Endothelial cell of umbilical vein (primary cell): ENCODE measurements at regions of chr5 and their contacts with region 1.

Region 1: DNA sequence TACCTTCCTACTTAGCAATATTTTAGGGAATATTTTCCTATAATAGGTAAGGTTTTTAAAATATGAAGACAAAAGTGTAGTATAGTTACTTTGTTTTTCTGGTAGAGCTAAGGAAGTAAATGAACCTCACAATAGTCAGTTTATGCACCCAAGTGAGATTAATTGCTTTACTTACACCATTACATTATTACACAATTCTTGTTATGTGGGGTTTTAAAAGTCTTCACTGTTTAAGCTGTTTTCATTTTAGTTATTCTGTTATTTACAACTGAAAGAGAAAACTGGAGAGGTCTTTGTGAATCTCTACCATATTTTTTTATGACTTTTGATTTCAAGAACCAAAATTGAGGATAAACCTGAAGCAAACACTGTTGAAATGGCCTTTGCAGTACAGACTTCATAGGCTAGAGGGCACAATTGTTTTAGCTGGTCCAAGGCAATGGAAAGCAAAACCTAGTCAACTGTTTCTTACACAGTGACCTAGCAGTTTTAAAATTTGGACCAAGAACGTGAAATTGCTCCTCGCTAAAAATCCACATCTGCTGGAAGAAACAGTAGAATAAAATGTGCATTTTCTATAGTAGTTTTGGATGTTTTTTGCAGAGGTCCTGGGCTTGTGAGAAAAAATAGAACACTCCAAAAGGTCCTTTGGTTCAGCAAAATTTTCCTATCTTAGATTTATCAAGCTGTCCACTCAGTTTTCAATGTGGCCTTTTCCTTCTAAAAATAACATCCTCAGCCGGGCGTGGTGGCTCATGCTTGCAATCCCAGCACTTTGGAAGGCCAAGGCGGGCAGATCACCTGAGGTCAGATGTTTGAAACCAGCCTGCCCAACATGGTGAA is 66.4 kb upstream of the FER start:
- DNase-seq: peak; percentile 81
- H3K4me3 ChIP-seq: no peak overlapping the region
- H3K27ac ChIP-seq: no peak overlapping the region
- H3K4me1 ChIP-seq: no peaks in the 10 kb centered on the region
- H3K27me3 ChIP-seq: no peaks in the 10 kb centered on the region
- CTCF ChIP-seq: peak; percentile 59 to 69
- POLR2A ChIP-seq: no peak

Region 2: GRCh38 chr5:108606185-108606584 is 75.1 kb before region 1 on chr5:
- CTCF ChIA-PET with region 1: no interaction called
- POLR2A ChIA-PET with region 1: no interaction called
- dilution Hi-C with region 1: no loop called
- intact Hi-C with region 1: no loop called
- DNase-seq: no peak
- H3K4me3 ChIP-seq: no peak overlapping the region
- H3K27ac ChIP-seq: no peak overlapping the region
- H3K4me1 ChIP-seq: no peaks in the 10 kb centered on the region
- H3K27me3 ChIP-seq: peaks cover 2 to 3% of the 10 kb centered on the region in 2 experiments
- CTCF ChIP-seq: no peak
- POLR2A ChIP-seq: no peak

Region 3: DNA sequence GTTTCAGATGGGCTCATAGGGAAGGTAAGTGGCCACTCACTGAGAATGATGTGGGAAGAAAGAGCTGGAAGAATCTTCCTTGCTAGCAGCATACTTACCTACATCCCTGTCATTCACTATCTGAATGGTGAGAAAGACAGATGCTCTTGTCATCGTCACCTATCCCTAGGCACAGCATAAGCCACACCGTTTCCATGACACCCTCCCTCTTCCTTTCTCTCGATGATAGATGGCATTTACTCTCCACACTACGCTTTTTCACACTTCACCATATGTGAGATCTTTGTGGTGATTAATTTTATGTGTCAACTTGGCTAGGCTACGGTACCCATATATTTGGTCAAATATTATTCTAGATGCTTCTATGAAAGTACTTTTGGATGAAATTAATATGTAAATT is 22.0 kb after region 1 on chr5:
- CTCF ChIA-PET with region 1: no interaction called
- POLR2A ChIA-PET with region 1: no interaction called
- dilution Hi-C with region 1: no loop called
- intact Hi-C with region 1: no loop called
- DNase-seq: no peak
- H3K4me3 ChIP-seq: no peak overlapping the region
- H3K27ac ChIP-seq: no peak overlapping the region
- H3K4me1 ChIP-seq: no peaks in the 10 kb centered on the region
- H3K27me3 ChIP-seq: no peaks in the 10 kb centered on the region
- CTCF ChIP-seq: no peak
- POLR2A ChIP-seq: no peak

Region 4: DNA sequence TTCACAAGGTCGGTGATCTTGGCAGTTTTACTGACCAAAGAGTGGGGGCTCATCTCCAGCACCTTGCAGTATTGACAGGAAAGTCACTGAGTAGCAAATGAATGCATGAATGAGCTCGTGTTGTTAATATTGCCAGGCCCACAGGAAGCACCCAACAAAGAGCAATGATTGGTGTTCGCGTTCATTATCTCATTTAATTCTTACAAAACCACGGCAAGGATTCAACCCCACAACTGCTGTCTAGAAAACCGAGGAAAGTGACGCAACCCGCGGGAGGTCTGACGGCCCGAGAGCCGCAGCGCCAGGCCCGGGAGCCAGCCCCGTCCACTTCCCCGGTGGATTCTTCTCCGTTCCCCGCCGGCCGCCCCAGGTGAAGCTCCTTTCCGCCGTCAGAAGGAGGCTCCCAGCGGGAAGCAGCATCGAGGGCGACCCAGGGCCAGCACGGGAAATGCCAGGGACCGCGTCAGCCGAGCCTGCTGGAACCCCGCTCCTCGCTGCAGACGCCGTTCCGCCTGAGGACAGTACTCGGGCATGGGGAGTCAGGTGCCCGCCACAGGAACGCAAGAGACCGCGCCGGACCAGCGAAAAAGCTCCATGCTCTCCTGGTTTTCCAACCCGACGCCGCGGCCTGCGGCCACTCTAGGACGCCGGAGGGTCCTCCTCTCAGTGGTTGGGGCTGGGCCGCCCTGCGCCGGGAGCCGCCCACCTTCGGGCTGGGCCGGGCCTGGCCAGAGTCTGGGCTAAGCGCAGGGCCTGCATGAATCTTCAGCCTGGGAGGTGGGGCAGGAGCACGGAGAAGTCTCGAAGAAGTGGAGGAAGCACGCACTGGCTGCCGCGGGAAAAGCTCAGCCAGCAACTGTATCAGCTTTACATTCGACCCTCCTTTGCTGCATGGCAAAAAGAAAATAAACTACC is 46.6 kb after region 1 on chr5:
- CTCF ChIA-PET with region 1: interaction called, 12 read pairs
- POLR2A ChIA-PET with region 1: interaction called, 3 read pairs
- dilution Hi-C with region 1: no loop called
- intact Hi-C with region 1: no loop called
- DNase-seq: peak; percentile 92
- H3K4me3 ChIP-seq: peak overlapping the region; percentile 54 to 84 (median 71)
- H3K27ac ChIP-seq: peak overlapping the region; percentile 68
- H3K4me1 ChIP-seq: peaks cover 23% of the 10 kb centered on the region
- H3K27me3 ChIP-seq: no peaks in the 10 kb centered on the region
- CTCF ChIP-seq: no peak
- POLR2A ChIP-seq: peak; percentile 92

Region 5: DNA sequence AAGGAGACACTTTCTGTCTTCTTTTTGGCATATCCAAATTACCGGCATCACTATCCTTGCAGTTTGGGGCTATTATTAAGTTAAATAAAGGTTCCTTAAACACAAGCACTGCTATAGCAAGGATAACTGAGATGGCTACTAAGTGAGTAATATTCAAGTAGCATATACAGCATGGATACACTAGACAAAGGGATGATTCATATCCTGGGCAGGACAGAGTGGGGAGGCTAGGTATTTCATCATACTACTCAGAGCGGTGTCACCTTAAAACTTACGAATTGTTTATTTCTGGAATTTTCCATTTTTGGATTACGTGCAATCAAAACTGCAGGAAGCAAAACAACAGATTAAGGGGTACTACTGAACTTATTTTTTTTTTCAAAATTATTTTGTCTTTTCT is 120.5 kb after region 1 on chr5:
- CTCF ChIA-PET with region 1: no interaction called
- POLR2A ChIA-PET with region 1: no interaction called
- dilution Hi-C with region 1: no loop called
- intact Hi-C with region 1: no loop called
- DNase-seq: peak; percentile 84
- H3K4me3 ChIP-seq: no peak overlapping the region
- H3K27ac ChIP-seq: peak overlapping the region; percentile 75
- H3K4me1 ChIP-seq: peaks cover 10% of the 10 kb centered on the region
- H3K27me3 ChIP-seq: no peaks in the 10 kb centered on the region
- CTCF ChIP-seq: no peak
- POLR2A ChIP-seq: no peak

Region 6: GRCh38 chr5:108919591-108920326 is 238.5 kb after region 1 on chr5:
- CTCF ChIA-PET with region 1: no interaction called
- POLR2A ChIA-PET with region 1: no interaction called
- dilution Hi-C with region 1: no loop called
- intact Hi-C with region 1: loop called (anchors 5 kb)
- DNase-seq: peak; percentile 25
- H3K4me3 ChIP-seq: no peak overlapping the region
- H3K27ac ChIP-seq: no peak overlapping the region
- H3K4me1 ChIP-seq: no peaks in the 10 kb centered on the region
- H3K27me3 ChIP-seq: no peaks in the 10 kb centered on the region
- CTCF ChIP-seq: no peak
- POLR2A ChIP-seq: no peak

Region 7: DNA sequence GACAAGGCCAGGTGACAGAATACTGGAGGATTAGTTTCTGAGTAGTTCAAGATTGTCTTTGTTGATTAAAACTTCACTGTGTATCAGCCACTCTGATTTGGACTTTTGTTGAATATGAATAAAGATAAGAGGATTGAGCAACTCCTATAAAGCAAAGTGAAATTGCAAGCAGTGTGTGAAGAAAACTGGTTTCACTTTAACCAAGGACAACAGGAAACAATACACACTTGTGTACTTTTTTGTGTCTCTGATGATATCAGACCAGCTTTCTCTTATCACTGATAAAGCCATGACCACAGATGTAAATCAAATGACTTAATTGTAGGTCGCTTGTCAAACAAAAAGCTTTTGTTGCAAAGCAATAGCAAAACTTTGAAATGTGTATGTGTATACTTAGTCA is 335.0 kb after region 1 on chr5:
- CTCF ChIA-PET with region 1: interaction called, 4 read pairs
- POLR2A ChIA-PET with region 1: no interaction called
- dilution Hi-C with region 1: no loop called
- intact Hi-C with region 1: loop called (anchors 5 kb)
- DNase-seq: no peak
- H3K4me3 ChIP-seq: no peak overlapping the region
- H3K27ac ChIP-seq: no peak overlapping the region
- H3K4me1 ChIP-seq: no peaks in the 10 kb centered on the region
- H3K27me3 ChIP-seq: no peaks in the 10 kb centered on the region
- CTCF ChIP-seq: no peak
- POLR2A ChIP-seq: no peak

Region 8: GRCh38 chr5:109439590-109439989 is 758.3 kb after region 1 on chr5:
- CTCF ChIA-PET with region 1: interaction called, 7 read pairs
- POLR2A ChIA-PET with region 1: no interaction called
- dilution Hi-C with region 1: no loop called
- intact Hi-C with region 1: loop called (anchors 2 kb)
- DNase-seq: no peak
- H3K4me3 ChIP-seq: no peak overlapping the region
- H3K27ac ChIP-seq: no peak overlapping the region
- H3K4me1 ChIP-seq: no peaks in the 10 kb centered on the region
- H3K27me3 ChIP-seq: no peaks in the 10 kb centered on the region
- CTCF ChIP-seq: no peak
- POLR2A ChIP-seq: no peak

Region 9: GRCh38 chr5:109468737-109469420 is 787.6 kb after region 1 on chr5:
- CTCF ChIA-PET with region 1: interaction called, 5 read pairs
- POLR2A ChIA-PET with region 1: no interaction called
- dilution Hi-C with region 1: no loop called
- intact Hi-C with region 1: loop called (anchors 1 kb)
- DNase-seq: peak; percentile 94
- H3K4me3 ChIP-seq: no peak overlapping the region
- H3K27ac ChIP-seq: no peak overlapping the region
- H3K4me1 ChIP-seq: peaks cover 2% of the 10 kb centered on the region
- H3K27me3 ChIP-seq: no peaks in the 10 kb centered on the region
- CTCF ChIP-seq: peak; percentile 69 to 73
- POLR2A ChIP-seq: no peak

Region 10: DNA sequence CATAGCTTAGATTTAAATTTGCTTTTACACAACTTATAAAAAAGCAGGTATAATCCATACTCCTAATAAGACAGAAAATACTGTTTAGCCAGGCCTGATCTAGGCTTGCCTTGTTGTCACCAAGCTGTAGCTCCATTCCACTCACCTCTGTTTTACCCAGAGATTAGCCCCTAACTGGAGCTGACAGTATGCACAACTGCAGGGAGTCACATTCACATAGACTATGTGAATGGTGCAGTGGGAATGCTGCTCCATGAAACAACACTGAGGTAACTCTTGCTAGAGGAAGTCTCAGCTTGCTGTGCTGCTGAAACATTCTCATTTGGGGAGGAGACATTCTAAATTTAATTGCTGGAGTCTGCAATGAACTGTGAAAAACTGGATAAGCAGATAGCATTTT is 1836.1 kb after region 1 on chr5:
- CTCF ChIA-PET with region 1: no interaction called
- POLR2A ChIA-PET with region 1: no interaction called
- dilution Hi-C with region 1: no loop called
- intact Hi-C with region 1: loop called (anchors 5 kb)
- DNase-seq: no peak
- H3K4me3 ChIP-seq: no peak overlapping the region
- H3K27ac ChIP-seq: no peak overlapping the region
- H3K4me1 ChIP-seq: no peaks in the 10 kb centered on the region
- H3K27me3 ChIP-seq: no peaks in the 10 kb centered on the region
- CTCF ChIP-seq: no peak
- POLR2A ChIP-seq: no peak